Gastrocnemius medialis (tissue), 4 donors: ENCODE measurements at regions of chr11 and their contacts with region 1.

Region 1: GRCh38 chr11:102109896-102110760 is at the start of gene YAP1:
- DNase-seq: peak; percentile 78 to 91
- ATAC-seq: peak; percentile 75 to 79
- H3K4me3 ChIP-seq: peak within 1 kb of the TSS; percentile 79 to 96 (median 82)
- H3K27ac ChIP-seq: peak within 1 kb of the TSS; percentile 93 to 99 (median 98)
- H3K4me1 ChIP-seq: peaks cover 25 to 35% of the 10 kb centered on the region in 2 donors
- H3K27me3 ChIP-seq: no peaks in the 10 kb centered on the region
- CTCF ChIP-seq: peak in 2 of 5 experiments; percentile 5 to 13
- POLR2A ChIP-seq: peak; percentile 60 to 75
- total RNA-seq, gene YAP1: 41.9 to 89.4 (median 72.6) TPM

Region 2: DNA sequence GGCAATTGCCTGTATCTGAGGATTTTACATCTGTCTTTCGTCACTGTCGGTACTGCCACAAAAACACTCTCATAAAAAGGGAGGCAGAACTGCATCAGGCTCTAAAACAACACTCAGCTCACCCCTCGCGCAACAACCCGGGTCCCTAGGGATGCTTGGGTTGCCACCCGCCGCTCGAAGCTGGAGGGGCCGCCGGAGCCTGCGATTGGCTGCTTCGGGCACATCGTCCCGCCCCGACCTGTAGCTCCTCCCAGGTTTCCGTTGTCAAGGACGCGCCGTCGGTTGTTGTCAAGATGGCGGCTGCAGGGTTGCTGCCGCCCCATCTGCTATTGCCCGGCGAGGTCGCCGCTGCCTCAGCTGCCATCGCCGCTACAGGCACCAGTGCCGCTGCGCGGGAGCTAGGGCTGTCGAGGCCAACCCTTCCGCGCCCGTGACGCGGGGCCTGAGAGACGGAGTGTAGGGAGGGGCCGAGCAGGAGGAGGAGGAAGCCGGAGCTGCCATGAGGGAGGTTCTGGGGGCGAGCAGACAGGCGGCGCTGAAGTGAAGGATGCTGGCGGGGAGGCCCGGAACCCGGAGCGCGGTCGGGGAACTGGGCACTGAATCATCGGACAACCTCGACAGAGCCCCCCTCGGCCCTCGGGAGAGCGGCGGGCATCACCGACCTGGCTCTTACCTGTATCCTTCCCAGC is 195.2 kb before region 1 on chr11 and contains the start of gene CEP126:
- in situ Hi-C with region 1: no loop called
- intact Hi-C with region 1: loop called (anchors 10 kb)
- DNase-seq: peak; percentile 87
- ATAC-seq: peak; percentile 96 to 98
- H3K4me3 ChIP-seq: peak within 1 kb of the TSS; percentile 73 to 98 (median 79)
- H3K27ac ChIP-seq: peak within 1 kb of the TSS; percentile 59 to 78 (median 66)
- H3K4me1 ChIP-seq: peaks cover 0 to 10% of the 10 kb centered on the region in 2 donors
- H3K27me3 ChIP-seq: no peaks in the 10 kb centered on the region
- CTCF ChIP-seq: peak in 3 of 5 experiments; percentile 34 to 54 (median 44)
- POLR2A ChIP-seq: peak in 1 of 2 donors; percentile 25
- total RNA-seq, gene CEP126: 0.42 to 0.63 (median 0.55) TPM

Region 3: GRCh38 chr11:102157219-102157618 is 47.1 kb after region 1 on chr11:
- in situ Hi-C with region 1: no loop called
- intact Hi-C with region 1: loop called (anchors 2 kb)
- DNase-seq: peak; percentile 56 to 78
- ATAC-seq: peak; percentile 87 to 89
- H3K4me3 ChIP-seq: no peak overlapping the region
- H3K27ac ChIP-seq: peak overlapping the region; percentile 72 to 79 (median 76)
- H3K4me1 ChIP-seq: peaks cover 47 to 69% of the 10 kb centered on the region in 2 donors
- H3K27me3 ChIP-seq: no peaks in the 10 kb centered on the region
- CTCF ChIP-seq: no peak
- POLR2A ChIP-seq: no peak